ENCODE measurements at regions of chr15 and their contacts with region 1.

Region 1: DNA sequence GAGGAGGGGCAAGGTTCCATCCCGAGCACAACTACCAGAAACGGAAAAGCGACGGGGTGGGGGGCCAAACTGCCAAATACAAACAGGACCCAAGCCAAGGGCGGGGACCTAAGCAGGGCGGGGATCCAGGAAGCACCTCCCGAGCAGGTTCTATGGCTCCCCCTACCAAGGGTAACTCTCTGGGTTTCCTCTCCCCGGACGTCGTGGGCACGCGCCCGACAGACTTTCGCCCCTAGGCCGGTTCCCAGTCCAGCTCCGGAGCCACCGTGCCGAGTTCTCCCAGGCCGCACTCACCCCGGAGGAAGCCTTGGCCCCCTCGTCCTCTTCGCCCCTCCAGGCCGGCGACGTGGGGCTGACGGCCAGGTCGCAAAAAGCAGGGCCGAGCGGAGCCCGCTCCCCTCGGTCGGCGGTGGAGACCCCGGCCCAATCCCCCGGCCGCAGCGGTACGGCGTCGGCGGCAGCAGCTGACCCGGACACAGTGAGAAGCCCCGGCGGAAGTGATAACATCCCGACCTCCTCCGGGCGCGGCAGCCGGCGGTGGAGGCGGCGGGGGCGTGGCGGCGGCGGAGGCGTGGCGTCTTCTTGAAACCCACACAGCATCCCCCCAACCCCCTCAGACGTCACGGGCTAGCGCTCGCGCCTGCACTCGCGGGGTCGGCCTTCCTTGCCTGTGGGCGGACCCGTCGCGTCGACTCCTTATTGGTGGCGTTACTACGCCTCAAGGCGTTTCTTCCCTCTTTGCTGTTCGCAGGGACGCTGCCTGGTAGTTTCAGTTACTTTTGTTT is at the start of gene BNIP2:
- DNase-seq: peak; percentile 99
- ATAC-seq: peak; percentile 89
- H3K4me3 ChIP-seq: peak within 1 kb of the TSS; percentile 66 to 99 (median 97)
- H3K4me3 Mint-ChIP-seq: peak within 1 kb of the TSS; percentile 89
- H3K27ac ChIP-seq: peak within 1 kb of the TSS; percentile 93 to 98
- H3K27ac Mint-ChIP-seq: peak within 1 kb of the TSS; percentile 98
- H3K4me1 ChIP-seq: peaks cover 43% of the 10 kb centered on the region in 2 donors
- H3K4me1 Mint-ChIP-seq: peaks cover 48% of the 10 kb centered on the region
- H3K27me3 ChIP-seq: no peaks in the 10 kb centered on the region
- H3K27me3 Mint-ChIP-seq: no peaks in the 10 kb centered on the region
- CTCF ChIP-seq: no peak
- total RNA-seq, gene BNIP2: 91.2 and 112 TPM in 2 replicates

Region 2: GRCh38 chr15:58749532-58750337 is 939.3 kb before region 1 on chr15 and contains the start of gene ADAM10:
- CTCF ChIA-PET with region 1: no interaction called
- POLR2A ChIA-PET with region 1: no interaction called
- intact Hi-C with region 1: loop called (anchors 2 kb)
- DNase-seq: peak; percentile 97
- ATAC-seq: peak; percentile 88
- H3K4me3 ChIP-seq: peak within 1 kb of the TSS; percentile 88 to 99 (median 99)
- H3K4me3 Mint-ChIP-seq: peak within 1 kb of the TSS; percentile 99
- H3K27ac ChIP-seq: peak within 1 kb of the TSS; percentile 86 to 92
- H3K27ac Mint-ChIP-seq: peak within 1 kb of the TSS; percentile 97
- H3K4me1 ChIP-seq: peaks cover 12 to 27% of the 10 kb centered on the region in 2 donors
- H3K4me1 Mint-ChIP-seq: peaks cover 35% of the 10 kb centered on the region
- H3K27me3 ChIP-seq: no peaks in the 10 kb centered on the region
- H3K27me3 Mint-ChIP-seq: no peaks in the 10 kb centered on the region
- CTCF ChIP-seq: no peak
- total RNA-seq, gene ADAM10: 138 and 143 TPM in 2 replicates

Region 3: DNA sequence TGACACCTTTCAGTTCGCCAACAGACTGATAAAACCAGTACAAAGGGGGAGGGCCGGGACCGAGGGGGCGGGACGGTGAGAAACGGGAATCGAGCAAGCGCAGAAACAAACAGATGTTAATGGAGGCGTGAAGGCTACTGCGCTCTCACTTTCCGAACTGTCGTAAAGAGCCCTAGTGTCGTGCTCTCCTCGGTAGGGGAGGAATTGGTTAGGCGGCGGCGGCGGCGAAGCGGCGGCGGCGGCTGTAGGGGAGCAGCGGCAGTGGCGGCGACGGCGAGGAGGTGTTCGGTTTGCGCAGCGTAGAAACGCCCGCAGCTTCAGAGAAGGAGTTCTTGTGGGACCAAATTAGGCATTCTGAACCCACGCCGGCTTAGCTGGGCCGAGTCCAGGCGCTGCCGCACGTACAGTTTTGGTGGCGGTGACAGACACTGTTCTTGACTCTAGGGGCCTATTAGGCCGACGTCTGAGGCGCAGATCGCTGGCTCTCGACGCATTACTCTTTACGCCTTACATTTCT is 701.5 kb before region 1 on chr15 and contains the start of gene RNF111:
- CTCF ChIA-PET with region 1: interaction called, 3 read pairs
- POLR2A ChIA-PET with region 1: no interaction called
- intact Hi-C with region 1: loop called (anchors 2 kb)
- DNase-seq: peak; percentile 95
- ATAC-seq: peak; percentile 93
- H3K4me3 ChIP-seq: peak within 1 kb of the TSS; percentile 76 to 100 (median 88)
- H3K4me3 Mint-ChIP-seq: peak within 1 kb of the TSS; percentile 88
- H3K27ac ChIP-seq: peak within 1 kb of the TSS; percentile 71 to 77
- H3K27ac Mint-ChIP-seq: peak within 1 kb of the TSS; percentile 92
- H3K4me1 ChIP-seq: peaks cover 12 to 16% of the 10 kb centered on the region in 2 donors
- H3K4me1 Mint-ChIP-seq: peaks cover 41% of the 10 kb centered on the region
- H3K27me3 ChIP-seq: no peaks in the 10 kb centered on the region
- H3K27me3 Mint-ChIP-seq: no peaks in the 10 kb centered on the region
- CTCF ChIP-seq: no peak
- total RNA-seq, gene RNF111: 72.3 and 82.1 TPM in 2 replicates

Region 4: GRCh38 chr15:59221511-59222505 is 467.2 kb before region 1 on chr15:
- CTCF ChIA-PET with region 1: no interaction called
- POLR2A ChIA-PET with region 1: no interaction called
- intact Hi-C with region 1: no loop called
- DNase-seq: no peak
- ATAC-seq: no peak
- H3K4me3 ChIP-seq: no peak overlapping the region
- H3K4me3 Mint-ChIP-seq: no peak overlapping the region
- H3K27ac ChIP-seq: no peak overlapping the region
- H3K27ac Mint-ChIP-seq: no peak overlapping the region
- H3K4me1 ChIP-seq: no peaks in the 10 kb centered on the region
- H3K4me1 Mint-ChIP-seq: no peaks in the 10 kb centered on the region
- H3K27me3 ChIP-seq: no peaks in the 10 kb centered on the region
- H3K27me3 Mint-ChIP-seq: no peaks in the 10 kb centered on the region
- CTCF ChIP-seq: no peak

Region 5: GRCh38 chr15:59605994-59606393 is 83.0 kb before region 1 on chr15:
- CTCF ChIA-PET with region 1: no interaction called
- POLR2A ChIA-PET with region 1: no interaction called
- intact Hi-C with region 1: no loop called
- DNase-seq: no peak
- ATAC-seq: no peak
- H3K4me3 ChIP-seq: no peak overlapping the region
- H3K4me3 Mint-ChIP-seq: no peak overlapping the region
- H3K27ac ChIP-seq: no peak overlapping the region
- H3K27ac Mint-ChIP-seq: no peak overlapping the region
- H3K4me1 ChIP-seq: no peaks in the 10 kb centered on the region
- H3K4me1 Mint-ChIP-seq: no peaks in the 10 kb centered on the region
- H3K27me3 ChIP-seq: peaks cover 0 to 8% (median 3%) of the 10 kb centered on the region in 4 experiments
- H3K27me3 Mint-ChIP-seq: peaks cover 19% of the 10 kb centered on the region
- CTCF ChIP-seq: no peak

Region 6: GRCh38 chr15:59725172-59725486 is 36.1 kb after region 1 on chr15:
- CTCF ChIA-PET with region 1: interaction called, 8 read pairs
- POLR2A ChIA-PET with region 1: no interaction called
- intact Hi-C with region 1: loop called (anchors 2 kb)
- DNase-seq: no peak
- ATAC-seq: no peak
- H3K4me3 ChIP-seq: no peak overlapping the region
- H3K4me3 Mint-ChIP-seq: no peak overlapping the region
- H3K27ac ChIP-seq: no peak overlapping the region
- H3K27ac Mint-ChIP-seq: no peak overlapping the region
- H3K4me1 ChIP-seq: no peaks in the 10 kb centered on the region
- H3K4me1 Mint-ChIP-seq: no peaks in the 10 kb centered on the region
- H3K27me3 ChIP-seq: peaks cover 0 to 5% (median 2%) of the 10 kb centered on the region in 4 experiments
- H3K27me3 Mint-ChIP-seq: peaks cover 26% of the 10 kb centered on the region
- CTCF ChIP-seq: no peak

Region 7: DNA sequence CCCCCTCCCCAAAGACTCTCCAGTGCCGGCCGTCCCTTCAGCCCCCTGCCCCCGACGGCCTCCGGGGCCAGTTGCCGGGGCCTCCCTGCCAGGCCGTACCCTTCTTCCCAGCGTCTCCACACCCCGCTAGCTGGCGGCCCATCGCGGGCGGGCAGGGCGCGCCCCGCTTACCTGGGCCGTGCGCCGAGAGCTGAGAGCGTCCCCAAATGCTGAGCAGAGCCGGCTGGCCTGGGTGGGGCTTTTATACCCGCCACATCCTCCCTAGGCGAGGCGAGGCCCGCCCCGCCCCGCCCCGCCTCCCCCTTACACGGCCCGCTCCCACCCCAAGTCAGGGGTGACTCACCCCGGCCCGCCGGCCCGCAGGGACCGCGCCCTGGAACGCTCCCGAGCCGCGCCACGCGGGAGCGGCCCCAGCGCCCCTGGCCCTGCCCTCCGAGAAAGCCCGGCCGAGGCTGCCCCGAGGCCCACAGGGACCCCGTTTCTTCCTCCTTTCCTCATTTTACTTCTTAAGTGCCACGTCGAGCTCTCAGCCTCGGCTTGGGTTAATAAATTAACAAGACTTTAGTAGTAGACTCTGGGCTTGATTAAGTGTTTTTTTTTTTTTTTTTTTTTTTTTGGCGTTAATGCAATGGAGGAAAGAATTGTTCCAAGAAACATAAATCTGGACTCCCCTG is 708.9 kb after region 1 on chr15 and contains the start of gene ANXA2:
- CTCF ChIA-PET with region 1: interaction called, 5 read pairs
- POLR2A ChIA-PET with region 1: interaction called, 12 read pairs
- intact Hi-C with region 1: loop called (anchors 2 kb)
- DNase-seq: peak; percentile 83
- ATAC-seq: peak; percentile 79
- H3K4me3 ChIP-seq: peak within 1 kb of the TSS; percentile 42 to 82 (median 72)
- H3K4me3 Mint-ChIP-seq: peak within 1 kb of the TSS; percentile 96
- H3K27ac ChIP-seq: peak within 1 kb of the TSS; percentile 44 to 60
- H3K27ac Mint-ChIP-seq: peak within 1 kb of the TSS; percentile 97
- H3K4me1 ChIP-seq: peaks cover 12 to 21% of the 10 kb centered on the region in 2 donors
- H3K4me1 Mint-ChIP-seq: peaks cover 40% of the 10 kb centered on the region
- H3K27me3 ChIP-seq: no peaks in the 10 kb centered on the region
- H3K27me3 Mint-ChIP-seq: no peaks in the 10 kb centered on the region
- CTCF ChIP-seq: no peak
- total RNA-seq, gene ANXA2: 122 and 133 TPM in 2 replicates

Region 8: GRCh38 chr15:60592371-60593169 is 903.5 kb after region 1 on chr15:
- CTCF ChIA-PET with region 1: no interaction called
- POLR2A ChIA-PET with region 1: interaction called, 5 read pairs
- intact Hi-C with region 1: loop called (anchors 2 kb)
- DNase-seq: peak; percentile 83
- ATAC-seq: peak; percentile 86
- H3K4me3 ChIP-seq: peak overlapping the region in 4 of 5 experiments; percentile 38 to 70 (median 62)
- H3K4me3 Mint-ChIP-seq: peak overlapping the region; percentile 85
- H3K27ac ChIP-seq: no peak overlapping the region
- H3K27ac Mint-ChIP-seq: peak overlapping the region; percentile 70
- H3K4me1 ChIP-seq: peaks cover 11 to 13% of the 10 kb centered on the region in 2 donors
- H3K4me1 Mint-ChIP-seq: peaks cover 10% of the 10 kb centered on the region
- H3K27me3 ChIP-seq: peaks cover 0 to 33% (median 23%) of the 10 kb centered on the region in 4 experiments
- H3K27me3 Mint-ChIP-seq: peaks cover 41% of the 10 kb centered on the region
- CTCF ChIP-seq: peak; percentile 10